ENCODE measurements at regions of chr7 and their contacts with region 1.

Region 1: GRCh38 chr7:786472-787255 is 45.6 kb upstream of the SUN1 start:
- DNase-seq: peak; percentile 57 to 83 (median 70)
- ATAC-seq: peak; percentile 100
- H3K4me3 ChIP-seq: no peak overlapping the region
- H3K4me3 Mint-ChIP-seq: no peak overlapping the region
- H3K27ac ChIP-seq: no peak overlapping the region
- H3K27ac Mint-ChIP-seq: no peak overlapping the region
- H3K4me1 ChIP-seq: peaks cover 4% of the 10 kb centered on the region
- H3K4me1 Mint-ChIP-seq: no peaks in the 10 kb centered on the region
- H3K27me3 ChIP-seq: no peaks in the 10 kb centered on the region
- H3K27me3 Mint-ChIP-seq: no peaks in the 10 kb centered on the region
- CTCF ChIP-seq: peak; percentile 73

Region 2: DNA sequence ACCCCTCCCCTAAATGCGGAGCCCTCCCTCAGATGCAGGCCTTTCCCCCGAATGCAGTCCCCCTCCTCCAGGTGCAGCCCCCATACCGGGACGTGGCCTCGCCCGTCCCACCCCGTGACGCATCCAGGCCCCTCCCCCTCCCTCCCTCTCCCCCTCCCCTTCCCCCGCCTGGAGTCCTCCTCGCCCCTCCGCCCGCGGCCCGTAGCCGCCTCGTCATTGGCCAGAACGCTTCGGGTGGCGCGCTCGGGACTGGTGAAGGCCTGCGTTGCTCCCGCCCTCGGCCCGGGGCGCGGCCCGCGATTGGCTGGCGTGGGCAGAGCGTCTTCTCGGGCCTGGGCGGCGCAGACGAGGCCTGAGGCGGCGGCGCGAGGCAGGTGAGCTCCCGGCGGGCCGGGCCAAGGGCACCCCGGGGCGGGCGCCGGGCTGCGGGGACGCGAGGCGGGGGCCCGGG is 29.7 kb after region 1 on chr7:
- CTCF ChIA-PET with region 1: no interaction called
- POLR2A ChIA-PET with region 1: interaction called, 3 read pairs
- intact Hi-C with region 1: loop called in 1 of 2 experiments (anchors 1 kb)
- DNase-seq: peak; percentile 93 to 98 (median 96)
- ATAC-seq: peak; percentile 94
- H3K4me3 ChIP-seq: peak overlapping the region; percentile 40 to 53
- H3K4me3 Mint-ChIP-seq: peak overlapping the region; percentile 61
- H3K27ac ChIP-seq: no peak overlapping the region
- H3K27ac Mint-ChIP-seq: no peak overlapping the region
- H3K4me1 ChIP-seq: peaks cover 34% of the 10 kb centered on the region
- H3K4me1 Mint-ChIP-seq: peaks cover 54% of the 10 kb centered on the region
- H3K27me3 ChIP-seq: no peaks in the 10 kb centered on the region
- H3K27me3 Mint-ChIP-seq: peaks cover 2% of the 10 kb centered on the region
- CTCF ChIP-seq: no peak

Region 3: GRCh38 chr7:831596-832166 is 45.0 kb after region 1 on chr7:
- CTCF ChIA-PET with region 1: no interaction called
- POLR2A ChIA-PET with region 1: no interaction called
- intact Hi-C with region 1: loop called (anchors 1 to 5 kb)
- DNase-seq: peak in 3 of 9 experiments; percentile 23 to 61 (median 30)
- ATAC-seq: peak; percentile 15
- H3K4me3 ChIP-seq: no peak overlapping the region
- H3K4me3 Mint-ChIP-seq: peak overlapping the region; percentile 75
- H3K27ac ChIP-seq: peak overlapping the region; percentile 66 to 75
- H3K27ac Mint-ChIP-seq: peak overlapping the region; percentile 92
- H3K4me1 ChIP-seq: peaks cover 27% of the 10 kb centered on the region
- H3K4me1 Mint-ChIP-seq: peaks cover 48% of the 10 kb centered on the region
- H3K27me3 ChIP-seq: no peaks in the 10 kb centered on the region
- H3K27me3 Mint-ChIP-seq: no peaks in the 10 kb centered on the region
- CTCF ChIP-seq: no peak

Region 4: DNA sequence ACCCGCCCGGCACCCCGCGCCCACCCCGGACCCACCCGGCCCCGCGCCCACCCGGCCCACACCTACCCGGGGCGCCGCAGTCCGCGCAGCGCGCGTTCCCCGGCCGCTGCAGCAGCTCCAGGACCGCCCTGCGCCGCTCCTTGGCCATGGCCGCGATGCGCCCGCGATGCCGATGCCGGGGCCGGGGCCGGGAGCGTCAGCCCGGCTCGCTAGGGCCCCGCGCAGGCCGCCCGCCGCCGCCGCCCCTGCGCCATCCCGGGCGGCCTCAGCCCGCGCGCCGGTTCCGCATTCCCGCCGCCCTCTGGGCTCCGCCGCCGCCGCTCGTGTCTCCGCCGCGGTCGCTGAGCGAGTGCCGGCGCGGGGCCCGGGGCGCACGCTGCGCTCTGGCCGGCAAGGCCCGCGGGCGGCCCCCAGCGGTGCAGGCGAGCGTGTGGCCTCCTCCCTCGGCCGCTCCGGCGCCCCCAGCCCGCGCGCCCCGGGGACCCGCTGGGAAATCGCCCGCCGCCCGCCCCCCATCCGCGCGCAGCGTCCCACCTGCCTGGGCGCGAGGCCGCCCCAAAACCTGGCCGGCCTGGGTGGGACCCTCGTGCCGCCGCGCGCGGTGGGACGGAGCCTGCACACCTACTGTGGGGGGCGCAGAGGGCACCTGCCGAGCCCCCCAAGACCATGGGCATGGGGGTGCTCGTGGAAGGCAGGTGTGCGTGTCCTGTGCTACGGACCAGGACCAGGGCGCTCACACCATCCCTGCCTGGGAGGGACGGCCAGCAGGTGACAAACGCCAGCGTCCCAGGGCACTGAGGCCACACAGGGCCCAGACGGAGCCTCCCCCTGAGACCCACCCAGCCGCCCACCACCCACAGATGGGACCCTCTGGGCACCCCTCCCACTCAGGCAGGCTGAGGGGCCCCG is 167.9 kb after region 1 on chr7 and contains the start of gene ADAP1:
- CTCF ChIA-PET with region 1: no interaction called
- POLR2A ChIA-PET with region 1: no interaction called
- intact Hi-C with region 1: loop called (anchors 1 to 2 kb)
- DNase-seq: peak in 8 of 9 experiments; percentile 45 to 87 (median 60)
- ATAC-seq: peak; percentile 83
- H3K4me3 ChIP-seq: peak within 1 kb of the TSS in 1 of 2 experiments; percentile 45
- H3K4me3 Mint-ChIP-seq: peak within 1 kb of the TSS; percentile 70
- H3K27ac ChIP-seq: no peak within 1 kb of the TSS
- H3K27ac Mint-ChIP-seq: peak within 1 kb of the TSS; percentile 70
- H3K4me1 ChIP-seq: no peaks in the 10 kb centered on the region
- H3K4me1 Mint-ChIP-seq: peaks cover 9% of the 10 kb centered on the region
- H3K27me3 ChIP-seq: no peaks in the 10 kb centered on the region
- H3K27me3 Mint-ChIP-seq: no peaks in the 10 kb centered on the region
- CTCF ChIP-seq: no peak
- total RNA-seq, gene ADAP1: 10.9 to 11.5 TPM